ENCODE measurements at regions of chr2 and their contacts with region 1.

Region 1: GRCh38 chr2:82275599-82275998 is 1971.0 kb upstream of the LRRTM1 start:
- DNase-seq: no peak
- H3K4me3 ChIP-seq: no peak overlapping the region
- H3K27ac ChIP-seq: no peak overlapping the region
- H3K4me1 ChIP-seq: no peaks in the 10 kb centered on the region
- H3K27me3 ChIP-seq: no peaks in the 10 kb centered on the region
- CTCF ChIP-seq: no peak
- EP300 ChIP-seq: no peak
- POLR2A ChIP-seq: no peak

Region 2: DNA sequence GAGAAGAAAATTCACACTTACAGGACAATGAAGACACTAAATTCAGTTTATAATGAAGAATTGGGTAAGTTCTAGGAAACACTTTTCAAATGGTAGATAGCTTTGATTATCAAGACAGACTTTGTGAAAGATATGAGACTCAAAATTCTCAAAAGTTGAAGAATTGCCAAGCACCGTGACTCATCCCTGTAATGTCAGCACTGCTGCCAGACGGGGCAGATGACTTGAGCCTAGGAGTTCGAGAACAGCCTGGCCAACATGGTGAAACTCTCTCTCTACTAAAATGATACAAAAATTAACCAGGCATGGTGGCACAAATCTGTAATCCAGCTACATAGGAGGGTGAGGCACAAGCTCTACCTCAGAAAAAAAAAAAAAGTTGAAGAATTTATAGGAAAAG is 151.0 kb before region 1 on chr2:
- in situ Hi-C with region 1: no loop called
- intact Hi-C with region 1: no loop called
- DNase-seq: no peak
- H3K4me3 ChIP-seq: no peak overlapping the region
- H3K27ac ChIP-seq: no peak overlapping the region
- H3K4me1 ChIP-seq: peaks cover 0 to 34% (median 14%) of the 10 kb centered on the region in 4 donors
- H3K27me3 ChIP-seq: no peaks in the 10 kb centered on the region
- CTCF ChIP-seq: no peak
- EP300 ChIP-seq: no peak
- POLR2A ChIP-seq: no peak

Region 3: GRCh38 chr2:82254728-82255127 is 20.9 kb before region 1 on chr2:
- in situ Hi-C with region 1: no loop called
- intact Hi-C with region 1: loop called (anchors 1 kb)
- DNase-seq: no peak
- H3K4me3 ChIP-seq: no peak overlapping the region
- H3K27ac ChIP-seq: no peak overlapping the region
- H3K4me1 ChIP-seq: no peaks in the 10 kb centered on the region
- H3K27me3 ChIP-seq: no peaks in the 10 kb centered on the region
- CTCF ChIP-seq: no peak
- EP300 ChIP-seq: no peak
- POLR2A ChIP-seq: no peak

Region 4: GRCh38 chr2:82539280-82539621 is 263.7 kb after region 1 on chr2:
- in situ Hi-C with region 1: no loop called
- intact Hi-C with region 1: no loop called
- DNase-seq: no peak
- H3K4me3 ChIP-seq: no peak overlapping the region
- H3K27ac ChIP-seq: no peak overlapping the region
- H3K4me1 ChIP-seq: no peaks in the 10 kb centered on the region
- H3K27me3 ChIP-seq: no peaks in the 10 kb centered on the region
- CTCF ChIP-seq: no peak
- EP300 ChIP-seq: no peak
- POLR2A ChIP-seq: no peak

Measured in transverse colon (tissue), 4 donors.